ENCODE measurements at regions of chr2 and their contacts with region 1.

Region 1: GRCh38 chr2:218557941-218558340 is 10.2 kb downstream of the USP37 start:
- DNase-seq: no peak
- ATAC-seq: no peak
- H3K4me3 ChIP-seq: no peak overlapping the region
- H3K27ac ChIP-seq: no peak overlapping the region
- H3K4me1 ChIP-seq: no peaks in the 10 kb centered on the region
- H3K27me3 ChIP-seq: no peaks in the 10 kb centered on the region
- CTCF ChIP-seq: no peak

Region 2: DNA sequence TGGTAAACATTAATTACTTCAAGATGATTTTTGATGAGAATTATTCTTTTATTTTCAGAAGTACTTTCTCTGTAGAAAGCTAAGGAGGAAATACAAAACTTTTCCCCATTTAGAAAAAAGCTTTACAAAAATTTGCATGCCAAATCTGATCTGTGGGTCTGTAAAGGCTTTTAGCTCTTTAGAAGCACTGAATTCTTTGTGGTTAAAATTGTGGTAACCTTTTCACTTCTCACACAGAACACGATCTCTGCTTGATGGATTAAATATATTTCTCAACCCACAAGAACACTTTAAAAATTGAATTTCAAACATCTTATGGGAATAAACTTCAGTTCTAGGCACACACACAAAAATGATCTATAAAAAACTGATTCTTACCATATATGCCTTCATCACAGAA is 75.3 kb before region 1 on chr2:
- intact Hi-C with region 1: loop called in 1 of 2 experiments (anchors 10 kb)
- DNase-seq: no peak
- ATAC-seq: no peak
- H3K4me3 ChIP-seq: no peak overlapping the region
- H3K27ac ChIP-seq: no peak overlapping the region
- H3K4me1 ChIP-seq: no peaks in the 10 kb centered on the region
- H3K27me3 ChIP-seq: no peaks in the 10 kb centered on the region
- CTCF ChIP-seq: no peak

Region 3: DNA sequence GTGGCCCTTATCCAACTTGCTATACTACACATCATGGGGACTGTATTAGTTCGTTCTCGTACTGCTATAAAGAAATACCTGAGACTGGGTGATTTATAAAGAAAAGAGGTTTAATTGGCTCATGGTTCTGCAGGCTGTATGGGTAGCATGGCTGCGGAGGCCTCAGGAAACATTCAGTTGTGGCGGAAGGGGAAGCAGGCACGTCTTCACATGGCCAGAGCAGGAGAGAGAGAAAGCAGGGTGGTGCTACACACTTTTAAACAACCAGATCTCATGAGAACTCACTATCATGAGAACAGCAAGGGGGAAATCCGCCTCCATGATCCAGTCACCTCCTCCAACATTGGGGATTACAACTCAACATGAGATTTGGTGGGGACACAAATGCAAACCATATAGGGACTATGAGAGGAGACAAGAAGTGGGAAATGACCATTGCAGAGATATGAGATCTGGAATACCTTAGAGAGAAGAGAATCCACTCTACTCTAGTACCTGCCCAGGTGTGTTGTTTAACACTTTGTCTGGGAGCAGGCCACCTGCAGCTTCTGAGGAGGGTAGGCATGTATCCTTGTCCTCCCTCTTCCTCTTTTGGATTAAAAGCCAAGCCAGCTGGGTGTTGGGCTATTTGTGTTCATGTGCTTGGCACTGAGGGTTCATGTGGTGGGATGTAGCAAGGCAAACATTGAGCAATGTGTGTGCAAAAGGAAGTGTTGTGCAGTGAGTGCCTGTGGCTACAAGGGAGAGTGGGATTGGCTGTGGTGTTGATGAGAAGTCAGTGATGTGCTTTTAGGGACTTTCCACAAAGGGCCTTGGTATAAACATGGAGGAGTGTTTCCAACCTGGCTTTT is 175.5 kb after region 1 on chr2:
- intact Hi-C with region 1: no loop called
- DNase-seq: peak in 1 of 2 donors; percentile 21
- ATAC-seq: peak; percentile 55 to 89 (median 74)
- H3K4me3 ChIP-seq: no peak overlapping the region
- H3K27ac ChIP-seq: peak overlapping the region; percentile 33
- H3K4me1 ChIP-seq: peaks cover 23% of the 10 kb centered on the region
- H3K27me3 ChIP-seq: no peaks in the 10 kb centered on the region
- CTCF ChIP-seq: no peak

Measured in psoas muscle (tissue), 8 donors.